Spleen (tissue), 13 donors: ENCODE measurements at regions of chr17 and their contacts with region 1.

Region 1: GRCh38 chr17:50853015-50853615 is 13.0 kb downstream of the TOB1 start:
- DNase-seq: no peak
- H3K4me3 ChIP-seq: no peak overlapping the region
- H3K27ac ChIP-seq: peak overlapping the region in 1 of 8 donors; percentile 78
- H3K4me1 ChIP-seq: peaks cover 0 to 16% (median 8%) of the 10 kb centered on the region in 6 donors
- H3K27me3 ChIP-seq: no peaks in the 10 kb centered on the region
- CTCF ChIP-seq: no peak
- POLR2A ChIP-seq: no peak

Region 2: DNA sequence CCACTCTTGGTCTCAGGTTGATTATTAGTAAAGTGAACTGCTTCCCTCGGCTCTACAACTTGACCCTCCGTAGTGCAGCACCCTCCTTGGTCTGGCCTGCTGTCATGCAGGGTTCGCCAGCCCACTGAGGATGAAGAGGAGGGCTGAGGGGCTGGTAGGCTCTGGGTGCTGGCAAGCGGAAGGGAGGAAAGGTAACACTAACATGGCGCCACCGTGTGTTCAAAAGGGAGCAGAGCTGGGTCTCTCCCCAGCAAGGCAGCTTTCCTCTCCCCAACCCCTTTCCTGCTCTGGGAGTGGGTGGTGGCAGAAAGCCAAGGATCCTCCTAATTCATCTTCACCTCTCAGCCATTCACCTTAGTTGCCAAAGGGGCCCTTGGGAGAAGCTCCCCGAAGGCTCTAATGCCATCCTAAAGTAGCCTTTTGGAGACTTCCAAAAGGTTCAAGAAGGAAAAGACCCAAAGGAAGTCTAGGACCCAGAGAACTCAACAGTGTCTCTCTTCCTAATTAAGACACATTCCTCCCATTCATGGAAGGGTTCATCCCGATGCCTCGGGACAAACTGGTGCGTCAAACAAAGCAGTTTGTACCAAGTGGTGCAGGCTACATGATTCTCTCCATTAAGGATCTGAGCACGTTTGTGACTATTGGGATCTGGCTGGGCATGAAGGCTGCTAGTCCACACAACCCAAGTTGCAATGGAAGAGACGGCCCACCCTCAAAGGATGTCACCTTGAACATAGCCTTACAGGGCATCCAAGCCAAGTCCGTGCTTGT is 103.8 kb after region 1 on chr17:
- intact Hi-C with region 1: loop called (anchors 5 kb)
- DNase-seq: peak; percentile 86
- H3K4me3 ChIP-seq: no peak overlapping the region
- H3K27ac ChIP-seq: peak overlapping the region in 5 of 8 donors; percentile 51 to 77 (median 69)
- H3K4me1 ChIP-seq: peaks cover 12 to 44% (median 26%) of the 10 kb centered on the region in 6 donors
- H3K27me3 ChIP-seq: no peaks in the 10 kb centered on the region
- CTCF ChIP-seq: peak; percentile 55 to 88 (median 77)
- POLR2A ChIP-seq: no peak